Endothelial cell of umbilical vein (primary cell): ENCODE measurements at regions of chr13 and their contacts with region 1.

Region 1: GRCh38 chr13:30408319-30409101 is 13.8 kb upstream of the UBE2L5 start:
- DNase-seq: peak; percentile 94
- H3K4me3 ChIP-seq: no peak overlapping the region
- H3K27ac ChIP-seq: no peak overlapping the region
- H3K4me1 ChIP-seq: peaks cover 3% of the 10 kb centered on the region
- H3K27me3 ChIP-seq: peaks cover 0 to 7% of the 10 kb centered on the region in 2 experiments
- CTCF ChIP-seq: peak; percentile 59 to 83
- POLR2A ChIP-seq: peak; percentile 34

Region 2: DNA sequence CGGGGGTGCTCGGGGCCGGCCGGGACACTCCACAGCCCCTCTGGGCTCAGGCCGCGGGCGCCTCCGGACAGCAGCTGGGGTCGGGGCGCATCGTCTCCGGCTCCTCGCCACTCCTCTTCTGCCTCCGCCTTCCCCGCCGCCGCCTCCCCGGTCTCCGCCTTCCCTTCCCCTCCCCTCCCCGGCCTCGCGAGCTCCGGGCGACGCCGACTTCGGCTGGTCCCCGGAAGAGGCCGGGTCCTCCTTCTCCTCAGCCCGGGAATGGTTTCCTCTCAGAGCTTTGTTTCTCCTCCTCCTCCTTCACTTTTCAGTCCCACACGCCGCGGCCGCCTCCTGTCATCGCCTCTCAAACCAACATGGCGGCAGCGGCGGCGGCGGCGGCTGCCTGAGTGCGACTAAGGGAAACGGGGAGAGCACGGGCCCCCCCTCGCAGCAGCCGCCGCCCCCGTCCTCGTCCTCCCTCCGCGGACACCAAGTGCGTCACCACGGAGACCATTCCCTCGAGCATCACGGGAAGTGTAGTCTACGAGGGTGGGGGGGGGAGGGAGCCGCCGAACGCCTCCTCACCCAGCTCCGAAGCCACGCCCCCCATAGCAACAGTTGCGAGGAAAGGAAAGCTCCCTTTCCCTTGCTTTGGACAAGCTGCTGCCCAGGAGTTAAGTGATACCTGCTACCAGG is 558.1 kb before region 1 on chr13 and contains the start of gene UBL3:
- CTCF ChIA-PET with region 1: no interaction called
- POLR2A ChIA-PET with region 1: no interaction called
- dilution Hi-C with region 1: no loop called
- intact Hi-C with region 1: loop called (anchors 5 kb)
- DNase-seq: peak; percentile 97
- H3K4me3 ChIP-seq: peak within 1 kb of the TSS; percentile 80 to 99 (median 98)
- H3K27ac ChIP-seq: peak within 1 kb of the TSS; percentile 83
- H3K4me1 ChIP-seq: peaks cover 22% of the 10 kb centered on the region
- H3K27me3 ChIP-seq: peaks cover 0 to 14% of the 10 kb centered on the region in 2 experiments
- CTCF ChIP-seq: no peak
- POLR2A ChIP-seq: peak; percentile 62
- total RNA-seq, gene UBL3: 11.1 and 11.8 TPM in 2 replicates

Region 3: GRCh38 chr13:29883941-29884518 is 524.5 kb before region 1 on chr13:
- CTCF ChIA-PET with region 1: no interaction called
- POLR2A ChIA-PET with region 1: no interaction called
- dilution Hi-C with region 1: no loop called
- intact Hi-C with region 1: no loop called
- DNase-seq: no peak
- H3K4me3 ChIP-seq: no peak overlapping the region
- H3K27ac ChIP-seq: no peak overlapping the region
- H3K4me1 ChIP-seq: no peaks in the 10 kb centered on the region
- H3K27me3 ChIP-seq: peaks cover 2 to 8% of the 10 kb centered on the region in 2 experiments
- CTCF ChIP-seq: no peak
- POLR2A ChIP-seq: no peak

Region 4: GRCh38 chr13:30364876-30365275 is 43.6 kb before region 1 on chr13:
- CTCF ChIA-PET with region 1: no interaction called
- POLR2A ChIA-PET with region 1: no interaction called
- dilution Hi-C with region 1: no loop called
- intact Hi-C with region 1: loop called (anchors 1 kb)
- DNase-seq: peak; percentile 95
- H3K4me3 ChIP-seq: peak overlapping the region in 1 of 3 experiments; percentile 29
- H3K27ac ChIP-seq: peak overlapping the region; percentile 95
- H3K4me1 ChIP-seq: peaks cover 30% of the 10 kb centered on the region
- H3K27me3 ChIP-seq: no peaks in the 10 kb centered on the region
- CTCF ChIP-seq: no peak
- POLR2A ChIP-seq: peak; percentile 61

Region 5: DNA sequence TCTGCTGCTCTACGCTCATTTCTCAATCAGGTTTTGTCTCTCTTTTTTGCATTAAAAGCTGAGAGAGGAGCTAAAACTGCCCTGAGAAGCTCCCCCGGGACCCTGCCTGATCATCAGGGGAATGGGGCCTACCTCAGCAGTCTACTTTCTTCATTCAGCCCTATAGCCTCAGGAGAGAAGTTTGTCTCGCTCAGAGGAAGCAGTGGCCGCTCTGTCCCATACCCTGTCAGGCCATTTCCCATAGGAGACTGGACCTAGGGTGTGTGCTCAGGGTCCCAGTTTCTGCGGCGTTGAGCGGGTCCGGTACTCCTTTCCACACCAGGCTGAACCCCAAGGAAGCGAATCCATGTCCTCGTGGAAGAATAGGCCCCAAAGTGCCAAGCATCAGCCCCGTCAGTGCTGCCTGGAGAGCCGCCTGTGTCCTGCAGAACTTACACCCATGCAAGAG is 35.5 kb after region 1 on chr13:
- CTCF ChIA-PET with region 1: interaction called, 3 read pairs
- POLR2A ChIA-PET with region 1: no interaction called
- dilution Hi-C with region 1: no loop called
- intact Hi-C with region 1: loop called (anchors 1 kb)
- DNase-seq: no peak
- H3K4me3 ChIP-seq: no peak overlapping the region
- H3K27ac ChIP-seq: no peak overlapping the region
- H3K4me1 ChIP-seq: peaks cover 9% of the 10 kb centered on the region
- H3K27me3 ChIP-seq: no peaks in the 10 kb centered on the region
- CTCF ChIP-seq: no peak
- POLR2A ChIP-seq: no peak

Region 6: DNA sequence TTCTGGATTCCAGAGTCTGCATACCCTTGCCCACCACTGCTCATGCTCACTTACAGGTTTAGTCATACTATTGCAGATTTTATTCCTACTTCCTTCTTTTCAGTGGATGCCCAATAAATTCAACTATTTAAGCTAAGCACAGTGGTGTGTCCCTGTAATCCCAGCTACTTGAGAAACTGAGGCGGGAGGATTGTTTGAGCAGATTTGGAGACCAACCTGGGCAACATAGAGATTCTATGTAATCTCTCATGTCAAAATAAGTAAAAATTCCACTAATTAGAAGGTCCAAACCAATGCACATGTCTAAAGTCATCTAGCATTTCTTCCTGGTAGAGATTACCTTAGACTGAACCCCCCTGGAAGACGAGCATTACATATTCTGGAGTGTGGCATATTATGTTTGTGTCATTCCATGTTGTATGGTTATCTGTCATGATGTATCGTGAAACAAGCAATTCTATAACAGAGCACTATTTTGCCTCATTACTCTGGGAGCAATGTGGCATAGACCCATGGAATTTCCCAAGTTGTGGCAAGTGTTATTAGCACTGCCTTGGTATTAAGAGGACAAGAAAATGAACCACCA is 48.9 kb after region 1 on chr13:
- CTCF ChIA-PET with region 1: no interaction called
- POLR2A ChIA-PET with region 1: no interaction called
- dilution Hi-C with region 1: no loop called
- intact Hi-C with region 1: loop called (anchors 2 kb)
- DNase-seq: no peak
- H3K4me3 ChIP-seq: no peak overlapping the region
- H3K27ac ChIP-seq: no peak overlapping the region
- H3K4me1 ChIP-seq: peaks cover 7% of the 10 kb centered on the region
- H3K27me3 ChIP-seq: no peaks in the 10 kb centered on the region
- CTCF ChIP-seq: no peak
- POLR2A ChIP-seq: no peak

Region 7: GRCh38 chr13:30572859-30573275 is 164.4 kb after region 1 on chr13:
- CTCF ChIA-PET with region 1: no interaction called
- POLR2A ChIA-PET with region 1: no interaction called
- dilution Hi-C with region 1: no loop called
- intact Hi-C with region 1: loop called (anchors 2 kb)
- DNase-seq: peak; percentile 77
- H3K4me3 ChIP-seq: peak overlapping the region; percentile 0 to 88 (median 73)
- H3K27ac ChIP-seq: peak overlapping the region; percentile 44
- H3K4me1 ChIP-seq: peaks cover 9% of the 10 kb centered on the region
- H3K27me3 ChIP-seq: no peaks in the 10 kb centered on the region
- CTCF ChIP-seq: peak in 1 of 2 donors; percentile 12
- POLR2A ChIP-seq: no peak